AG04450 (cell line): ENCODE measurements at regions of chrX and their contacts with region 1.

Region 1: DNA sequence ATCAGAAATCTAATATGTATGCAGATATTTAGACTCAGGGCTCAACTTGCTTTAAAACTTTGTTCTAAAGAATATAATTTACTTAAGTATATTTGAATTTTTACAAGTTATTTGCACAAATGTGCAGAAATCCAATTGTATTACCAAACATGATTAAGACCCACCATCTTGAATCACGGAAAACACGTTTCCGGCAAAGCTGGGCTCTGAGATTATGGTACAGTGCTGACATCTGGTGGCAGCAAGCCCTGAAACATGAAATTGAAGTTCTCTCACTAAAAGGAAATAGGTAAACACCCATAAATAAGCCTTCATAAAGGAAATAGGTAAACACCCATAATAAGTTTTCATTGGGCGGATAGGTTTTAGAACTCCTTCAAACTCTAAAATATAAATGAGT is 98.3 kb upstream of the MAOA start:
- DNase-seq: peak; percentile 8
- H3K4me3 ChIP-seq: no peak overlapping the region
- H3K27ac ChIP-seq: no peak overlapping the region
- H3K27me3 ChIP-seq: no peaks in the 10 kb centered on the region
- CTCF ChIP-seq: peak; percentile 54

Region 2: DNA sequence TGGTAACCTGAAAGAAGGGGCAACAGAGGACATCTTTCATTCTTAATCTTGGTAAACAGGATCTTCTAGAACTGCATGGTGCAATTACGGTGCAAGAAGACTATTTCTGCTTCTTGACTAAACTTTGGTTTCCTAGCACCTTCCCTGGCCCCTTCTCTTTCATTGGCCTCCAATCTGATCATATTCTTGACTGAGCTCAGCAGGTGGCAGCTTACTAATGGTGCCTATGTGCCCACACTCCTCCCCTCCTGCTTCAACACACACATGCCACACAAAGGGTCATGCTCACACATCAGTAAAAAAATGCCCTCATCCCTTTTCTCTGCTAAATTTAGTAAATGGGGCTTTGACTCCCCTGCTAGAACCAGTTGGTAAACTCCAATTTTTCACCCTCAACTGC is 302.2 kb before region 1 on chrX:
- CTCF ChIA-PET with region 1: no interaction called
- POLR2A ChIA-PET with region 1: no interaction called
- DNase-seq: no peak
- H3K4me3 ChIP-seq: no peak overlapping the region
- H3K27ac ChIP-seq: no peak overlapping the region
- H3K27me3 ChIP-seq: no peaks in the 10 kb centered on the region
- CTCF ChIP-seq: no peak

Region 3: DNA sequence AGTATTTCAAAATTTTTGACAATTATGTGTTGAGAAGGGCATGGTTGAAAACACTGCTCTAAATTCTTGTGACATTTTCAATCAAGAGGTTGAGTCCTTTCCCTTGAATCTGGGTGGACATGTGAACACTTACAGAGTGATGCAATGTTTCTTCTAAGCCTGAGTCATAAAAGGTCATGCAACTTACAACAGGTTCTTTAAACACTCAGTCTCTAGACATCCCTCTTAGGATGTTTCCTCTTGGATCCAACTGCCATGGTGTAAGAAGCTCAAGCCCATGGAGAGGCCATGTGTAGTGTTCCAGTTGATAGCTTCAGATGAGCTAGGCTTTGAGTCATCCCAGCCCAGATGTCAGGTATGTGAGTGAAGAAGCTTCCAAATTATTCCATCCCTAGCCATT is 133.9 kb before region 1 on chrX:
- CTCF ChIA-PET with region 1: no interaction called
- POLR2A ChIA-PET with region 1: no interaction called
- DNase-seq: no peak
- H3K4me3 ChIP-seq: no peak overlapping the region
- H3K27ac ChIP-seq: no peak overlapping the region
- H3K27me3 ChIP-seq: no peaks in the 10 kb centered on the region
- CTCF ChIP-seq: no peak

Region 4: DNA sequence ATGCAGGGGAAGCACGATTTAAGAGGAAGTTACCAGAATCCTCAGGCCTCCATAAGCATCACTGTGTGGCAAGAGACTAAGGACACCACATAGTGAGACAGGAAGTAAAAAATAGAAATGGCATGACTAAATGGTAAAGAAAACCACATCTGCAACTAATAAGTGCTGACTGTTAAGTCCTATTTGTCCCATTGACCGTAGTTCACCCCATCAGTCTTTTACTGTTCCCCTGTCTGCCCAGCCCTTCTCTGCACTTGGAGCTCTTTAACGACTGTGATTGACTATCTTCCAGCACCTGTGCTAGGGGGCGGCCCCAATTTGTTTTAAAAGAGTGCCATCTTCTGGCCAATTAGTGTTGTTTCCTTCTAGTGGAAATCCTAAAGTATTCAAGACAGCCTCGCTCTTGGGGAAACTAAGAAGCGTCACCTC is 192.5 kb after region 1 on chrX:
- CTCF ChIA-PET with region 1: interaction called, 32 read pairs
- POLR2A ChIA-PET with region 1: no interaction called
- DNase-seq: peak; percentile 1
- H3K4me3 ChIP-seq: no peak overlapping the region
- H3K27ac ChIP-seq: no peak overlapping the region
- H3K27me3 ChIP-seq: no peaks in the 10 kb centered on the region
- CTCF ChIP-seq: peak; percentile 42